Naive thymus-derived CD8-positive, alpha-beta T cell (primary cell): ENCODE measurements at regions of chr11 and their contacts with region 1.

Region 1: DNA sequence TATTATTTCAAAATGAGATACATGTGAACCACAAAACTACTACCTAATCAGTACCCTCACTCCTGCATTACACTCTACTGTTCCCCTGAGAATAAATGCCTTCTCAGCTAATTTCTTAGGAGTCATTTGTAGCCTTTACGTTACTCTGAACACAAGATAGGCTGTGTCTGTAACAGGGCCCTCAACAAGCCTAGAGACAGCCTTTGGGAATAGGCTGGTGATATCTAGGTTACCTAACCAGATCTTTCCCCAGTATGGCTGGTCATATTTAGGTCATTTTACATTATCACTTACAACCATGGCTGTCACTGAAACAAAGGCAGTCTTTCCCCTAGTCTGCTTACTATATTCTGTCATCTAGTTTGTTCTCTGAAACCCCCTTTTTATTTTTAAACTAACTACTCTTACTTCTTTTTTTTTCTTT is 14.2 kb downstream of the ATM start:
- DNase-seq: peak in 3 of 10 donors; percentile 27 to 49 (median 43)
- ATAC-seq: peak; percentile 33 to 53
- H3K4me3 Mint-ChIP-seq: peak overlapping the region; percentile 23 to 87 (median 73)
- H3K27ac Mint-ChIP-seq: peak overlapping the region in 9 of 10 donors; percentile 90 to 98 (median 96)
- H3K4me1 Mint-ChIP-seq: peaks cover 29 to 88% (median 77%) of the 10 kb centered on the region in 4 donors
- H3K27me3 Mint-ChIP-seq: no peaks in the 10 kb centered on the region

Region 2: DNA sequence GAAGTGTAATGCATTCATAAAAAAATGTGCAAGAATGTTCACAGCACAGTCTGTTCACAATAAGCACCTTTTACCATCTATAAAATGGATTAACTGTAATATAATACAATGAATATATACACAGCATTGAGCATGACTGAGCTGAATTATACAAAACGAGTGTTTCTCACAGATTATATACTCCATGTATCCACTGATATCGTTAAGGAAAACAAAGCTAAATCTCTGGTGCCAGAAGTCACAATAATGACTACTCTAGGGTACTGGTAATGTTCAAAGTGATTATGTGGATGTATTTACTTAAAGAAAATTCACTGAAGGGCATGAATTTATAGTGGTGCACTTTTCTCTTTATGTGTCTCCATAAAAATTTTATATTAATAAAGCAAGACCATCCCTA is 82.5 kb before region 1 on chr11:
- POLR2A ChIA-PET with region 1: no interaction called
- DNase-seq: no peak
- ATAC-seq: no peak
- H3K4me3 Mint-ChIP-seq: no peak overlapping the region
- H3K27ac Mint-ChIP-seq: peak overlapping the region in 4 of 10 donors; percentile 3 to 66 (median 36)
- H3K4me1 Mint-ChIP-seq: peaks cover 2 to 6% (median 3%) of the 10 kb centered on the region in 4 donors
- H3K27me3 Mint-ChIP-seq: no peaks in the 10 kb centered on the region

Region 3: DNA sequence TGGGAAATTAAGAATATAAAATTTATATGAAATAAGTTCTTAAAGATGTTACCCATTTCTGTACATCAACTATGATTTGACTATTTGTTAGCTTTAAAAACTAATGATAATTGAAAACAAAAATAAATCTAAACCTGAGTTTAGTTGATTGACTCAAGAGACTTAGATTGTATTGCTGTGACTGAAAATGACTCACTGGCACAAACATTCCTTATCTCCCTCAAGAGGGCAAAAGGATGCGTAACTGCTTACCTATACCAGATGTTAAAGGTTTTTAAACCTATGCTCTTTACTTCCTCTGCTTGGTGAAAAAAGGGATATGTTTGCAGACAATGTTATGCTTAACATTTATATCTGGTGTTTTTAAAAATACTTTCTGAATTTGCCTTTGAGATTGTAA is 16.1 kb after region 1 on chr11:
- POLR2A ChIA-PET with region 1: interaction called, 62 read pairs
- DNase-seq: no peak
- ATAC-seq: peak; percentile 47 to 61
- H3K4me3 Mint-ChIP-seq: peak overlapping the region in 1 of 10 donors; percentile 26
- H3K27ac Mint-ChIP-seq: peak overlapping the region in 9 of 10 donors; percentile 18 to 90 (median 76)
- H3K4me1 Mint-ChIP-seq: peaks cover 18 to 79% (median 65%) of the 10 kb centered on the region in 4 donors
- H3K27me3 Mint-ChIP-seq: no peaks in the 10 kb centered on the region